GM10248 (cell line): ENCODE measurements at regions of chr5 and their contacts with region 1.

Region 1: DNA sequence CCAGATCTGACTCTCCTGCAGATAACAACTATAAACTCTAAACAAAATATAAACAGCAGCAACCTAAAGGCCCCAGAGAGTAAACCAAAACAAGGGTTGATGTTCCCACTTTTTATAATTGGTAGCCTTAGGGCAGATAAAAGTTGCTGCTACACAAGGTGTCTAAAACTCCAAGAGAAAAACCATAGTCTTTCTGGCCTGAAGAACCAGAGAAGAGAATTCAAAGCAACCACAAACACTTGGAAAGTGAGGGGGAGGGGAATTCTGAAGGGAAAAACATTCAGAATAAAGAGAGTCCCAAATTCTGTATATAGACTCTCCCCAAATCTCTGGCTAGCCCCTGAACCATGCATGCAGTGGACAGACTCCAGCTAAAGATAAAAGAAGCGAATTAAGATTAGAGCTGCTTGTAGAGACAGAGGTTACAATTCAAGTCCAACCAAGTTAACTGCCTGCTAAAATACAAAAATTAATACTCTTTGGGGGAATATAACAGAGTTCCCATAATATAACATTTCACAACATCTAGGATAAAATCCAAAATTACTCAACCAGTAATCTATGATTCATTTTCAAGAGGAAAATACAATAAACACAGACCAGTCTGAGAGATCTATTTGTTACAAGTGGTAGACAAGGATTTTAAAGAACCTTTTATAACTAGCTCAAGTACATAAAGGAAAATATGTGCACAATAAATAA is 37.5 kb upstream of the RGMB start:
- DNase-seq: no peak
- CTCF ChIP-seq: no peak

Region 2: DNA sequence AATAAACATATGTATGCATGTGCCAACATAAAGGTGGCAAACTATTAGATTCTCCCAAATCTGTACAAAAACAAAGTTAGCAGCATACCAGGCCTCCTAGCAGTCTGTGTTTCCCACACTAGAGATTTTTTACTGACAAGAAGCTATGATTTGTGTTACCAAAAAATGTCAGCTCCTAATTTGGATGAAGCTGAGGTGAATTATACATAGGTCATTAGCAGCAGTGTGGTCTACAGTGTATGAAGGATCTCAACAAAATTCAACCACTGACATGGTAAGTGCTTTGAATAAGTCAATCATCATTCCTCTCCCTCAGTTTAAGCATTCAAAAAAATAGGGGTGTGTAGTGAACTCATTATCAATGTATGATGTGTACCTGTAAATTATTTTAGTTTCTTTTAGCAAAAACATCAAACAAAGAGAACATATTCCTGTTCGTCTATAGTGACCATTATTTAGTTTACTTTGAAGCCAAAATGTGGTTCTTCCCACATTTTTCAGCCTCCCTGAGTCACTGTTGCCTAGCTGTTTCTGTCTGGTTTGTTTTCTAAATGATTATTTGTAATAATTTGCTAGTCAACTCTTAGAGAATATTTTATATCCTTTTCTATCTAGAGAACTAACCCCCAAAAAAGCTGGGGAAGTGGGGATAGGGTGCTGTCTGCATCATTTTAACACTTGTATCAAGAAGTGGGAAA is 14.6 kb before region 1 on chr5:
- CTCF ChIA-PET with region 1: interaction called, 12 read pairs
- POLR2A ChIA-PET with region 1: no interaction called
- DNase-seq: no peak
- CTCF ChIP-seq: no peak